GM10248 (cell line): ENCODE measurements at regions of chr12 and their contacts with region 1.

Region 1: GRCh38 chr12:30345744-30346471 is 349.8 kb downstream of the IPO8 start:
- DNase-seq: no peak
- CTCF ChIP-seq: no peak

Region 2: GRCh38 chr12:30329281-30329680 is 16.6 kb before region 1 on chr12:
- CTCF ChIA-PET with region 1: interaction called, 10 read pairs
- POLR2A ChIA-PET with region 1: no interaction called
- DNase-seq: no peak
- CTCF ChIP-seq: no peak

Region 3: DNA sequence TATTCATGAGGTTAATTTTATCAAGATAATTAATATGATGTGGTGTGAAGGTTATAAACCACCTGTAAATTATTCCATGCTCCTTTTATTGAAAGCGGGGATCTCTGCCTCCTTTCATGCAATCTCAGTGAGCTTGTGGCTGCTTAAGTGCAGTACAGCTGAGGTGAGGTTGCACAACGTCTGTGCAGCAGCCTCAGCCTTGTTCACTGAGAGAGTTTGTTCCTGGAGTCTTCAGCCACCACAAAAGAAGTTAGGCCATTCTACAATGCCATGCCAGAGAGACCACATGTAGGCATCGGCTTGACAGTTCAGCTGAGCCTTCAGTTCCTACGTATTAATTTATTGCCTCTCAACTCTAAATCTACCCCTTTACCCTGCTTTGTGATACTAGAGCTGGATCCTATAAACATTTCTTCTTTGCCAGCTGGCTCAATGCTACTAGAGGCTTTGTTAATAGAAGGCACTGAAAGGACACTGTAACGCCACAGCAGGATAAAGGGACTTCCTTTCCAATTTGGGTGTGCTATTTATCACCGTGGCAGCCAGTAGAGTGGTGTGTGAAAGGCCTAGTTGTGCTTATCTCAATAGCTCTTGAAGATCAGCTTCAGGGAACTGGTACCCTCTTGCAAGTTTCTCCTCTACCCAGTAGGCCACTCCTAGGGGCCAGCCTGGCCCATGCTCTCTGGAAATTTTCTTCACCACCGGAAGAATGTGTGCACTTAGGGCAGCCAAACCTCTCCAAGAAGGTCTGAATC is 12.0 kb after region 1 on chr12:
- CTCF ChIA-PET with region 1: no interaction called
- POLR2A ChIA-PET with region 1: no interaction called
- DNase-seq: no peak
- CTCF ChIP-seq: no peak

Region 4: GRCh38 chr12:30450872-30451271 is 105.0 kb after region 1 on chr12:
- CTCF ChIA-PET with region 1: no interaction called
- POLR2A ChIA-PET with region 1: no interaction called
- DNase-seq: no peak
- CTCF ChIP-seq: no peak

Region 5: GRCh38 chr12:30564394-30564793 is 218.5 kb after region 1 on chr12:
- CTCF ChIA-PET with region 1: no interaction called
- POLR2A ChIA-PET with region 1: no interaction called
- DNase-seq: no peak
- CTCF ChIP-seq: no peak